G401 (cell line): ENCODE measurements at regions of chr11 and their contacts with region 1.

Region 1: DNA sequence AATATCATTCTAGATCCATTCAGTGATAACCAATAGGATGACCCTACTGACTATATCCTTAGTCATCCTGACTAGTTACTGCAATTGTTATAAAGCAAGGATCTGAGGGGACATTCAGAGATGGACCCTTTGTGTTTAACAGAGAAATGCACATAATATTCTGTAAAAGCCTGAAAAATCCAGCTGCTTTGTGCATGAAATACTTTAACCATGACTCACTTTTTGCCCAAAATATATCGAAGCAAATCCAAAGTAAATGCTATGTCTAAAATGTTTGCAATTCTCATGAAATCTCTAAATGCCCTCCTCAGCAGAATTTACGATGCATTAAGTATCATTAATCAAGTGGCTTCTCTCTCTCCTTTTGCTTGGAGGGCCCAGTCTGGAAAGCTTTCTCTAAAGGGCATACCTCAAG is 178.8 kb upstream of the MTMR2 start:
- DNase-seq: no peak

Region 2: DNA sequence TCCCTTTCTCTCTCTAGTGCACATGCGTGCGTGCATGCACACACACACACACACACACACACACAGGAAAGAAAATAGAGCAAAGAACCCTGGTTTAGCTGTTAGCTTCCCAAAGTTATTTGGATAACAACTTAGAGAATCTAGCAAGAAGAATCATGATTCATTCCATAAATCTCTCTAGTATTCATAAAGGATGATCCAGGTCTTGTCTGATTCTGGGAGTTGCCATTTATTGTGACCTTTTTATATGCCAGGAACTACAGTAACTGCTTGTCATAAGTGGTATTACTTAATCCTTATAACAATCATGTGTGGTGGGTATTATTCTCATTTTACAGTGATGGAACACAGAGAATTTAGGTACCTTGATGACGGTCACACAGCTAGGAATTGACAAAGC is 37.3 kb before region 1 on chr11:
- in situ Hi-C with region 1: no loop called
- DNase-seq: no peak

Region 3: DNA sequence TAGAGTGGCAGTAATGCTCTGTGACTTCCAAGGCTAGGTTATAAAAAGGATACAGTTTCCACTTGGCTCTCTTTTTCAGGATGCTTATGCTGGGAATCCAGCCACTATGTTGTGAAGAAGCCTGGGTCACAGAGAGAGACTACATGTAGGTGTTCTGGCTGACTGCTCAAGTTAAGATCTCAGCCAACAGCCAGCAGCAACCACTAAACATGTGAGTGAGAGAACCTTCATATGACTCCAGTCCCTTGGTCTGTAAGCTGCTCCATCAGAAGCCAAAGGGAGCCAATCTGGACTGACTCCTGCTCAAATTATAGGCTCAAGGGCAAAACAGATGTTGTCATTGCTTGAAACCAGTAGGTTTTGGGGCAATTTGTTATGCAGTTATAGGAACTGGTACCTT is 77.7 kb after region 1 on chr11:
- in situ Hi-C with region 1: no loop called
- DNase-seq: peak; percentile 57

Region 4: DNA sequence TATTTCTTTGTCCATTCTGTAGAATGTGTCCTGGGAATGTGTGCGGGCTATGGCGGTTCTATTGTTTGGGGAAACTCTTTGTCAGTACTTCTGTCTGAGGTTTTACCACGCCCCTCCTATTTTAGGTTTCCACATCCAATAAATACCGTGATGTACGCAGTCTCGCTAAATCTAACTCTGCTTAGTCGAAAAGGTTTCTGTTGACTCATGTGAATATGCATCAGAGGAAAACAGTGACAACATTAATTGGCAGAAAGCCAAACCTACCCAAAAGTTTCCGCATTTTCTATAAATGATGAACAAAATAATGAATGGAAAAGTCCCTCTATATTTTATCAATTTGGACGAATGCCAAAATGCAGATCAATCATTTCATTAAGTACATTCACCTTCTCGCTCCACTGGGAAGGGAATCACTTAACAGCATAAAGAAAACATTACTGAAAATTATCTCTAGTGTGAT is 96.9 kb after region 1 on chr11:
- in situ Hi-C with region 1: loop called (anchors 5 kb)
- DNase-seq: no peak